ENCODE measurements at regions of chr19 and their contacts with region 1.

Region 1: DNA sequence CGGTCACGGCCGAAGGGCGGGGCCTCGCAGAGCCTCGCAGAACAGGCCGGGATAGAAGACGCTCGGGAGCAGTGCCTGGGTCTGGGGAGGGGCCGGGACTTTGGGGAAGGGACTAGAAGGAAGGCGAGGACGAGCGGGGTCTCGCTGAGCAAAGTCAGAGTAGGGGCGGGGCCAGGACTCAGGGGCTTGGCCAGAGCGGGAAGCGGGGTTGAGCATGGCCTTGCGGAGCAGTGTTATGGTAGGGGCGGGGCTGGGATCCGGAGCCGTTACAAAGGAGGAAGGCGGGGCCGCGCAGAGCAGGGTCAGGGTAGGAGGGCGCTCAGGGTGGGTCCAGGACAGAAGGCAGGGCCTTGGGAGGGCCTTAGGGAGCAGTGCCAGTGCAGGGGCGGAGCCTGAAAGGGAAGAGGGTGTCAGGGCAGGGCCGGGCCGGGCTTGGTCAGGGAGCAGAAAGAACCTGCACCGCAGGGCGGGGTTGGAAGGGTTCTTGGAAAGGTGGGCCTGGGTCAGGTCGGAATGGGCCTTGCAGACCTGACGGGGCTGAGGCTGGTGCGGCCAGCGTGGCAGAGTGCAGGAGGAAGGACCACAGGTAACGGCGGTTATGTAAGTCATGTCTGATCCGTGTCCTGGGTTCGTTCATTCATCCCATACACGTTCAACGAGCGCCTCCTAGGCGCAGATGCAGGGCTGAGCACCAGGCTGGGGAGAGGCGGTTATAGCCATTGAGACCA is 557 bp upstream of the ATP8B3 start:
- DNase-seq: peak; percentile 94 to 99 (median 98)
- H3K4me3 ChIP-seq: peak overlapping the region in 3 of 4 donors; percentile 10 to 48 (median 31)
- H3K27ac ChIP-seq: peak overlapping the region in 4 of 5 donors; percentile 73 to 85 (median 78)
- H3K4me1 ChIP-seq: peaks cover 12 to 24% of the 10 kb centered on the region in 2 donors
- H3K27me3 ChIP-seq: no peaks in the 10 kb centered on the region
- CTCF ChIP-seq: peak; percentile 19 to 65 (median 54)
- POLR2A ChIP-seq: peak in 1 of 2 donors; percentile 52

Region 2: GRCh38 chr19:1540365-1540925 is 272.2 kb before region 1 on chr19:
- intact Hi-C with region 1: loop called in 1 of 2 experiments (anchors 10 kb)
- DNase-seq: no peak
- H3K4me3 ChIP-seq: no peak overlapping the region
- H3K27ac ChIP-seq: no peak overlapping the region
- H3K4me1 ChIP-seq: no peaks in the 10 kb centered on the region
- H3K27me3 ChIP-seq: peaks cover 3% of the 10 kb centered on the region
- CTCF ChIP-seq: no peak
- POLR2A ChIP-seq: no peak